Activated CD4-positive, alpha-beta T cell treated with anti-CD3 and anti-CD28 coated beads, Interleukin-2, amount 10 ng/mL, durations not matched to agents 24 days and 14 days (primary cell): ENCODE measurements at regions of chr13 and their contacts with region 1.

Region 1: DNA sequence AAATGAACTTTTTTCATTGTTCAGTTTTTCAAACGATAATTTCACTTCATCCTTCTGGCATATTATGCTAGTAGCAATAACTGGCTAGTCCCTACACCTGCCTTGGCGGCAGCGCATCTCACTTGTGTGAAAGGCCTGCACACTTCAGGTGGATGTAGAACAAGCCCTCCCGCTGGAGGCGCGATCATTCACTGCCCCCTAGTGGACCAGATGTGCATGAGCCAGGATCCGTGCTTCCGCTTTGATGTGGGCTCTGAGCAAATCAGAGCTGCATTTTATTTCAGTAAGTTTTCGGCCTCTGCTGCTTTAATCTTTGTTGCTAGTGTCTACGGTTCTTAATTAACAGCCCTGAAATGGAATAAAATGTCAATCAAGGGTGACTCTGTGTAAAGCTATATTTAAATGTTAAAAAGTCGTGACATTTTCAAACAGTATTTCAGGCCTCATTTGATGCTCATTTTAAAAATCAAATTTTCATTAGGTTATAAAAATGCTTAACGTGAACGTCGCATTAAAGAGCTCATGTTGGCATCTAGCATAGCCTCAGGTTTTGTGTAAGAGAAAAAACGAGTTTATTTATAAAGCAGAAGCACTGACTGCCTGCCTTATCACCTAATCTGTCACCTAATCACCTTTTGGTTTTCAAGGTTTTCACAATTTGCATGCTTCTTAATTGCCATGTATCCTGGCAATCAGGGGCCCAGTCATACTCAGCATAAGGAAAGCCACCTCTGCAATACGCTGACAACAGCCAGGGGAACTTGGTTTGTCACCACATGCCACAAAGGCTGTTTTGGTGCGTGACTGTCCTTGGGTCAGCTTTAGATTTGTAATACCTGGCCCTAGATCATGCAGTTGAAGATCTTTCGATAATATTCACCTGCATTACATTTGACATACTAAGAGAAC is 112.2 kb downstream of the TEX26 start:
- DNase-seq: peak; percentile 96
- H3K4me3 Mint-ChIP-seq: peak overlapping the region; percentile 74
- H3K27ac Mint-ChIP-seq: peak overlapping the region; percentile 91
- H3K4me1 Mint-ChIP-seq: peaks cover 48% of the 10 kb centered on the region
- H3K27me3 Mint-ChIP-seq: peaks cover 4% of the 10 kb centered on the region

Region 2: GRCh38 chr13:30142486-30143211 is 902.0 kb before region 1 on chr13:
- intact Hi-C with region 1: loop called (anchors 5 kb)
- DNase-seq: peak; percentile 78
- H3K4me3 Mint-ChIP-seq: peak overlapping the region; percentile 37
- H3K27ac Mint-ChIP-seq: peak overlapping the region; percentile 93
- H3K4me1 Mint-ChIP-seq: peaks cover 54% of the 10 kb centered on the region
- H3K27me3 Mint-ChIP-seq: peaks cover 2% of the 10 kb centered on the region

Region 3: GRCh38 chr13:30673669-30674521 is 370.7 kb before region 1 on chr13:
- intact Hi-C with region 1: loop called (anchors 5 kb)
- DNase-seq: peak; percentile 96
- H3K4me3 Mint-ChIP-seq: peak overlapping the region; percentile 86
- H3K27ac Mint-ChIP-seq: peak overlapping the region; percentile 80
- H3K4me1 Mint-ChIP-seq: peaks cover 9% of the 10 kb centered on the region
- H3K27me3 Mint-ChIP-seq: peaks cover 25% of the 10 kb centered on the region

Region 4: DNA sequence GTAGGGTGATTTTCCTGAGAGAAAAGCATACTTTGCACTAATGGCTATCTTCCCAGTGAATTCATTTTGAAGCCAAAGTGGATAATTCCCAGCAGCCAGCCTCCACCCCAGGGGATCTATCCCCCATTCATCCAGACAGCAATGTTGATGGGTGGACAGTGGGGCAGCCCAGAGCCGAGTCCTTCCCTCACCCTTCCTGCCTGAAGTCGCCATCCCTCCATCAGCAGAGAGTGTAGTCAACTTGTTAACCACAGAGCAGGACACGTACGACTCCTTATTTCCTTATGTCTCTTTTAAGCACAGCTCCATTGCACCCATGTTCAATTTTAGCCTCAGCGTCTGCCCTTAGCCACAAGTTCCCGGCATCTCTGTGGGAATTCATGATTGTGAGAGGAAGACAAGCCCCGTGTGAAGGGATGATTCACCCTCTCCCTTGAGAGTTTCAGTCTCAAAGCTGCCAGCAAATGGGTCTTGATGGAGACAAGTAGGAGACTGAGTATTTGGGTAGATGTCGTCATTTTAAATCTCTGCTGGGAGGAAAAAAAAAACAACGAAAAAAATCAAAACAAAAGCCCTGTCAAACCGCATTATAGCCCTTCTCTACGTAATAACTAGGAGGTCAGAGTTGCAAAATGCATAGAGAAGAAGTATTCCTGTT is 196.9 kb before region 1 on chr13:
- intact Hi-C with region 1: loop called (anchors 2 kb)
- DNase-seq: no peak
- H3K4me3 Mint-ChIP-seq: no peak overlapping the region
- H3K27ac Mint-ChIP-seq: no peak overlapping the region
- H3K4me1 Mint-ChIP-seq: peaks cover 9% of the 10 kb centered on the region
- H3K27me3 Mint-ChIP-seq: peaks cover 5% of the 10 kb centered on the region

Region 5: GRCh38 chr13:30978981-30979956 is 65.4 kb before region 1 on chr13:
- intact Hi-C with region 1: loop called (anchors 1 kb)
- DNase-seq: peak; percentile 85
- H3K4me3 Mint-ChIP-seq: no peak overlapping the region
- H3K27ac Mint-ChIP-seq: no peak overlapping the region
- H3K4me1 Mint-ChIP-seq: no peaks in the 10 kb centered on the region
- H3K27me3 Mint-ChIP-seq: peaks cover 29% of the 10 kb centered on the region

Region 6: DNA sequence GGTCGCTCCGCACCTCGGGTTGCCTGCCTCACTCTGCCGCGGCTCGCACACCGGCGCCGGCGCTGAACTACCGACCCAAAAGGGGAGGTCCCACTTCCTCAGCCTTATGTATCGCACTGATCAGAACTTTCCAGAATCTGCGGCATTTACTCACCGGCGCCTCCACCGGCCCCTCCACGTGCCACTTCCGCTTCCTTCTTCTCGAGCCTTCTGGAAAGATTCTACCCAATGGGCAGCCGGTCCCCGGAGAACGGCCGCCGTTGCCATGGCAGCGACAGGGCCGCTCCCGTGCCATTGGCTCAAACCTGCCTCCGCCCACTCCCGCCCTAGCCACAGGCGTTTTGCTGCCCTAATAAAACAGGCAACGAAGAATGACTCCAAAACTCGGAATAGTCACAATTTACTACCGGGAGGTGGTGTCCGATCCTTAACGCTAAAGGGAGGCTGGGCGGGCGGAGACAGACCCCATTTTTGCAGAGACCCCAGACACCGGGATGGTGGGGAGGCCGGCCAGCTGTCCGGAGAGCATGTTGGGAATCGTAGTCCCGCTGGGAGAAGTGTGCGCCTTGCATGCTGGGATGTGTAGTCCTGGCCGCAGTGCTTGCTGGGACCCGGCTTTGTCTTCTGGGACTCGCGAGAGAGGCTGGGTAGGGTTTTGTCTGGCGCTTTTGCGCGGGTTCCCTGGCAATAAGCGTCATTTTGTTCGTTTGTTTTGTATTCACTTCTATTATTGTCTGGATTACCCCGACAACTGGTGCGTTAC is 117.4 kb after region 1 on chr13 and contains the start of gene HSPH1:
- intact Hi-C with region 1: loop called (anchors 1 kb)
- DNase-seq: peak; percentile 100
- H3K4me3 Mint-ChIP-seq: peak within 1 kb of the TSS; percentile 99
- H3K27ac Mint-ChIP-seq: peak within 1 kb of the TSS; percentile 99
- H3K4me1 Mint-ChIP-seq: peaks cover 45% of the 10 kb centered on the region
- H3K27me3 Mint-ChIP-seq: peaks cover 2% of the 10 kb centered on the region
- total RNA-seq, gene HSPH1: 381 and 385 TPM in 2 replicates

Region 7: DNA sequence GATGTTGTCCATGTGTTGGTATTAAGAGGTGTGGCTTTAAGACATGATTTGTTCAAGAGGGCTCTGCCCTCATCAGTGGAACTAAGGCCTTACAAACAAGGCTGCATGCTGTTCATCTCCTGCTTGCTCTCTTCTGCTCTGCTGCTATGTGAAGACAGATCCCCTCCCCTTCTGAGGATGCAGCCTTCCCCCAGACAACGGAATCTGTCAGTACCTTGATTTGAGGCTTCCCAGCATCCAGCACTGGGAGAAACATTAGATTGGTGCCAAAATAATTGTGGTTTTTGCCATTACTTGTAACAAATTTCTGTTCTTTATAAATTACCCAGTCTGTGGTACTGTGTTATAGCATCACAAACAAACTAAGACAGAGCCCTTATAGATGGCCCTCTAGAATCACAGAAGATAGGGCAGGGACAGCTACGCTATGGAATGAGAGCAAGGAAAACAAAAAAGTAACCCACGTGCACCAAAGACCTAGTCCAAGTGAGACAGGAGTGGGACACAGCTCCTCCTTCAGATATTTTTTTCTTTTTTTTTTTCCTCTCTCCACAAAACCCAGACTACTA is 543.2 kb after region 1 on chr13:
- intact Hi-C with region 1: no loop called
- DNase-seq: no peak
- H3K4me3 Mint-ChIP-seq: no peak overlapping the region
- H3K27ac Mint-ChIP-seq: no peak overlapping the region
- H3K4me1 Mint-ChIP-seq: no peaks in the 10 kb centered on the region
- H3K27me3 Mint-ChIP-seq: no peaks in the 10 kb centered on the region